Esophagus muscularis mucosa (tissue), 4 donors: ENCODE measurements at regions of chr6 and their contacts with region 1.

Region 1: GRCh38 chr6:97186416-97186999 is 96.5 kb downstream of the MMS22L start:
- DNase-seq: no peak
- H3K4me3 ChIP-seq: no peak overlapping the region
- H3K27ac ChIP-seq: no peak overlapping the region
- H3K4me1 ChIP-seq: peaks cover 0 to 2% (median 0%) of the 10 kb centered on the region in 4 donors
- H3K27me3 ChIP-seq: no peaks in the 10 kb centered on the region
- CTCF ChIP-seq: peak; percentile 72 to 83 (median 78)
- EP300 ChIP-seq: no peak
- POLR2A ChIP-seq: no peak

Region 2: GRCh38 chr6:97394160-97394748 is 207.7 kb after region 1 on chr6:
- intact Hi-C with region 1: loop called (anchors 5 kb)
- DNase-seq: no peak
- H3K4me3 ChIP-seq: no peak overlapping the region
- H3K27ac ChIP-seq: no peak overlapping the region
- H3K4me1 ChIP-seq: no peaks in the 10 kb centered on the region
- H3K27me3 ChIP-seq: no peaks in the 10 kb centered on the region
- CTCF ChIP-seq: peak; percentile 75 to 88 (median 79)
- EP300 ChIP-seq: no peak
- POLR2A ChIP-seq: no peak